Psoas muscle (tissue), 8 donors: ENCODE measurements at regions of chr12 and their contacts with region 1.

Region 1: DNA sequence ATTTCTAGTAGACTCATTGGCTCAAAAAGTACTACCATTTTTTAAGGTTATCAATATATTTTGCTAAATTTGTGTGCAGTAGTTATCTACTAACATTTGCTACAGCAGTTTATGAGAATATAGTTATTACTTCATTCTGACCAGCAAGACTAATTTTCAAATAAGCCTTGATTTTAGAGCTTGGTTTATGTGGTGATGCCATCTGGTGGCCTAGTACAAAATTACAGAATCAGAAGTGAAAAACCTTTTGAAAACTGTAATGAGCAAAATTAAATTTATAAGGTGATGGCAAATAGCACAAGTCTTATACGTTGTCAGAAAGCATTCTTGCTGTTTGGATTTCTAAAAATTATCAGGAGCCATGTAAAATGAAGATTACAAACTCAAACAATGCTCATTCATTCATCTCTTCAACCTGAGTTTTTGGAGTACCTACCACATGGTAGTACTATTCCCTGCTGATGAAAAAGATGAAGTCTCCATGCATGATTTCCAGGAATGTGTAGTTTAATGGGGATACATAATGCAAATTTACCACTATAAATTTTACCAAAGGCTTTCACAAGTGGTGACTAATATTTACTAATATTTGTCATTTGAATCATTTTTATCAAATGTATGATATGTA is 51.0 kb downstream of the MAGOHB start:
- DNase-seq: no peak
- ATAC-seq: no peak
- H3K4me3 ChIP-seq: no peak overlapping the region
- H3K27ac ChIP-seq: no peak overlapping the region
- H3K4me1 ChIP-seq: no peaks in the 10 kb centered on the region
- H3K27me3 ChIP-seq: no peaks in the 10 kb centered on the region
- CTCF ChIP-seq: peak; percentile 76

Region 2: GRCh38 chr12:10153271-10154144 is 408.9 kb before region 1 on chr12:
- intact Hi-C with region 1: loop called in 1 of 2 experiments (anchors 10 kb)
- DNase-seq: peak; percentile 60 to 83
- ATAC-seq: peak; percentile 94 to 96 (median 94)
- H3K4me3 ChIP-seq: peak overlapping the region; percentile 67
- H3K27ac ChIP-seq: peak overlapping the region; percentile 70
- H3K4me1 ChIP-seq: no peaks in the 10 kb centered on the region
- H3K27me3 ChIP-seq: no peaks in the 10 kb centered on the region
- CTCF ChIP-seq: peak; percentile 78

Region 3: DNA sequence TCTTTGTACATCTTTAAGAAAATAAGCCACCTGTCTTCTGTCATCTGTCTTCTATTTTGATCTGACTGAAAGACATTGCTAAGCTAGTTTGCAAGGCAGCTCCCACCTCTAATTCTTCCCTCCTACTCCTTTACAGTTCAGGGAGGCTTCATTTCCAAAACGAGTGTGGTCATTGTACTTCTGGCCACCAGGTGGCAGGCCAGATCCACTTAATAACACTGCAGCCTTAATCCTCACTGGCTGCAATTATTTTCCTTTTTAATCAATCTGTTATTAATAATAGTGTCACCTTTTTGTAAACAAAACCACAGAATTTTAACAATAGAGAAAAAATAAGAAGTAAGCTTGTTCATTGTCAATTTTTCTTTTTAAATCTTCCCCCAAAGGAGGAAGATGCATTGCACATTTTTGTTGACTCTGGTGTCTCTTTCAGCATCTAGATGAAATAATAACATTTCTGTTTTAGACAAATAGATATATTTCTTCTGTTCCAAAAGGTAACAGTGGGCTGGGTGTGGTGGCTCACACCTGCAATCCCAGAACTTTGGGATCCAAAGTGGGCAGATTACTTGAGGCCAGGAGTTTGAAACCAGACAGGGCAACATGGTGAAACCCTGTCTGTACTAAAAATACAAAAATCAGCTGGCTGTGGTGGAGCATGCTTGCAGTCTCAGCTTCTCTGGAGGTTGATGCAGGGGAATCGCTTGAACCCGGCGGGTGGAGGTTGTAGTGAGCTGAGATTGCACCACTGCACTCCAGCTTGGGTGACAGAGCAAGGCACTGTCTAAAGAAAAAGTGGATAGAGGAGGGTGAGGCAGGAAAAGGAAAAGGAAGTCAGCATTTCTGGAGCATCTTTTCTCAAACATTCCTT is 326.4 kb before region 1 on chr12:
- intact Hi-C with region 1: loop called (anchors 2 kb)
- DNase-seq: no peak
- ATAC-seq: peak; percentile 76 to 89 (median 79)
- H3K4me3 ChIP-seq: no peak overlapping the region
- H3K27ac ChIP-seq: no peak overlapping the region
- H3K4me1 ChIP-seq: no peaks in the 10 kb centered on the region
- H3K27me3 ChIP-seq: no peaks in the 10 kb centered on the region
- CTCF ChIP-seq: peak; percentile 92

Region 4: GRCh38 chr12:10331642-10332239 is 230.7 kb before region 1 on chr12:
- intact Hi-C with region 1: loop called (anchors 1 to 2 kb)
- DNase-seq: no peak
- ATAC-seq: peak; percentile 67 to 82 (median 70)
- H3K4me3 ChIP-seq: no peak overlapping the region
- H3K27ac ChIP-seq: no peak overlapping the region
- H3K4me1 ChIP-seq: no peaks in the 10 kb centered on the region
- H3K27me3 ChIP-seq: no peaks in the 10 kb centered on the region
- CTCF ChIP-seq: peak; percentile 77